Heart right ventricle (tissue), 16 donors: ENCODE measurements at regions of chr17 and their contacts with region 1.

Region 1: DNA sequence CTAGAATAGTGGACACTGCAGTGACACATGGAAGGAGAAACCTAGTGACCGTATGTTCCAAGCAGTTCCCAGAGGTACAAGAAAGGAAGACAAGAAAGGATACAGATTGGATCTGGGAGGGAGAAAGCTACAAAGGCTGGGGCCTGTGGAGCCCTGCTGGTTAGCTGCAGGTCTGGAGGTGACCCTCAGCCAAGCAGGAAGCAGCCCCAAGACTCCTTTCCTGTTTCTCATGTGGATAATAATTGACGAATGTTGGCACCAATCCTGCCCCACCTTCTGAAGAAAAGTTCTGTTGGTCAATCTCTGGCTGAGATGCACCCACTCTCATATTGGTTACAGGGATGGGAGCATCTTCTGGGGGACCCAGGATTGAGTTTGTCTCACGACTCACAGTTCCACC is 99.8 kb downstream of the SHISA6 start:
- DNase-seq: no peak
- ATAC-seq: no peak
- H3K4me3 ChIP-seq: no peak overlapping the region
- H3K27ac ChIP-seq: no peak overlapping the region
- H3K4me1 ChIP-seq: no peaks in the 10 kb centered on the region
- H3K27me3 ChIP-seq: peaks cover 0 to 13% (median 0%) of the 10 kb centered on the region in 7 donors
- CTCF ChIP-seq: no peak

Region 2: DNA sequence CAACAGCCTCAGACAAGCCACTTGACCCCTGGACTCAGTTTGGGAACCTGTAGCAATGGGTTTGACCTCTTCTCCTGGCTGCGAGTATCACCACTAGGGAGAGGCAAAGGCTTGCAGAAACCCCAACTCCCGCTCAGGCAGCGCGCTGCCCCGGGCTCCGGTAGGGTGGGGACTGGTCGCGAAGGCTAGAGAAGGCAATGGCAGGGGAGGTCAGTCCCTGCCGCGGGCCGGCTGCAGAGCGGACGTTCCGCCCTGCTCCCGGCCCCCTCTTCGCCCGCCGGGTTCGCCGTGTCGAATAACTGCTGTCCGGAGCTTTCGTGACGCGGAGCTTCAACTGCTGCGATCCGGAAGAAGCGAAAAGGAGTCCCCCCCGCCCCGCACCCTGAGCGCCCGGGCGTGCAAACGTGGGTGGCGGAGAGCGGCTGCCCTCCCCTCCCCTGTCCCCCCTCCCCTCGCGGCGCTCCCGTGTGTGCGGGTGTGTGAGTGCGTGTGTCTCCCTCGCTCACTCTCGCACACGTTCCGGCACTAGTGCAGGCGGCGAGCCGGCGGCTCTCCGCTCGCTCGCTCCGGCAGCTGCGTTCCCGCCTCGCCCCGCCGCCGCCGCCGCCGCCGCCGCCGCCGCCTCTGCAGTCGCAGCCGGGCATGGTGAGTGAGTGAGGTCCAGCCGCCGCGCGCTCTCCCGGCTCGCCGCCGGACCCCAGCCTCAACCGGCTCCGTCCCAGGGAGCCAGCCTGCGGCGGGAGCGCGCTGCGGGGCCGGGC is 100.6 kb before region 1 on chr17:
- intact Hi-C with region 1: loop called in 1 of 10 experiments (anchors 10 kb)
- DNase-seq: peak; percentile 13 to 23
- ATAC-seq: peak; percentile 24 to 71 (median 46)
- H3K4me3 ChIP-seq: peak overlapping the region in 9 of 10 donors; percentile 25 to 51 (median 44)
- H3K27ac ChIP-seq: peak overlapping the region in 1 of 10 donors; percentile 44
- H3K4me1 ChIP-seq: peaks cover 0 to 7% (median 0%) of the 10 kb centered on the region in 9 donors
- H3K27me3 ChIP-seq: peaks cover 0 to 81% (median 60%) of the 10 kb centered on the region in 7 donors
- CTCF ChIP-seq: no peak

Region 3: DNA sequence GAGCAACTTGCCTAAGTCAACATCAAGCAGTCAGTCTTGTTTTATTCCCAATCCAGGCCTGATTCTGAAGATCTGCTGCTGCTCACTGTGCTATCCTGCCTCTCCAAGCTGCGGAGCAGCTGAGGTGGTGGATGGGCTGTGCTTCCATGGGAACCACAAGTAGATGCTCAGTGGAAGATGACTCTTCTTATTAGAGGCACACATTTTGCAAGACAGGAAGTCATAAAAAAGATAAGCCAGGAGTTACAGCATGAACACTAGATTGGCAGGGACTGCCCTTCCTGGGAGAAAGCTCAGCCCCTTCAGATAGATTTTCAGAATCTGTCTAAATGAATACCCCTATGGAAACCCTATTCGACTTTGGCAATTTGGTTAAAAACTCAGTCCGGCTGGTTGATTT is 43.3 kb after region 1 on chr17:
- intact Hi-C with region 1: no loop called
- DNase-seq: no peak
- ATAC-seq: no peak
- H3K4me3 ChIP-seq: no peak overlapping the region
- H3K27ac ChIP-seq: no peak overlapping the region
- H3K4me1 ChIP-seq: no peaks in the 10 kb centered on the region
- H3K27me3 ChIP-seq: peaks cover 0 to 14% (median 0%) of the 10 kb centered on the region in 7 donors
- CTCF ChIP-seq: no peak